AG04449 (cell line): ENCODE measurements at regions of chr15 and their contacts with region 1.

Region 1: DNA sequence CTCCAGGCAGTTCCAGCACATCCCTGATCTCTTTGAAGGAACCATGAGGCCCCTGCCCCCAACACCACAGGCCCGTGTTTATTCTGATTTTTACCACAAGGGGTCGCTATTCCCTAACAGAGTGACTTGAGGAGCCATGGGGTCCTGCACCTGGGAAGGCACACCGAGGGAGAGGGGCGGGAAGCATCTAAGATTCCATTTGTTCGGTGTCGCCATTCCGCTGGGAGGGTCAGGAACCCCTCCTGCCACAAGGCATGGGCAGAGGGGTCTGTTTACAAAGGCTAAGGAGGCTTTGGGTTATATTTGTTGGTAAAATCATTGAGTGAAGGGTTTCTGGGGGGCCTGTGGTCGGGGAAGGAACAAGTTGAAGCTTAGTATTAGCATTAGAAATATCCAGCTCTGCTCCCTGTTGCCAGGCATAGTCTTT is 77.1 kb downstream of the WDR76 start:
- DNase-seq: no peak
- H3K4me3 ChIP-seq: no peak overlapping the region
- CTCF ChIP-seq: peak; percentile 70

Region 2: GRCh38 chr15:43872416-43873020 is 31.4 kb before region 1 on chr15:
- CTCF ChIA-PET with region 1: interaction called, 10 read pairs
- POLR2A ChIA-PET with region 1: no interaction called
- DNase-seq: peak; percentile 28
- H3K4me3 ChIP-seq: no peak overlapping the region
- CTCF ChIP-seq: peak; percentile 77

Region 3: DNA sequence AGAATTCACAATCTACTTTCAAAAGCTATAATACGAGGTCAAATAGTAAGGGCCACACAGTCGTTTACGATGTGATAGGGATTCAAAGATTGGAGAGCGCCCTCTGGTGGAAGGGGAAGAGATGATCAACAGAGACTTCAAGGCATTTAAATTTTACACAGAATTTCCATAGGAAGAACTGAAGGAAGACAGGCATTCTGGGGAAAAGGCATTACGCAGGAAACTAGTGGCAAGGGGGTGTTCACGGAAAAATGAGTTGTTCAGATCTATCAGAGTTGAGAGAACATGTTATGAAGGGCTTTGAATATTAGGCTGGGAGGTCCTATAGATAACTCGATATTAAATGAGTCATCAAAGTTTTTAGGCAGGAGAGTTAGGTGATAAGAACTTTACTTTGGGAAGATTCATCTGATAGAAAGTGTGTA is 162.5 kb after region 1 on chr15:
- CTCF ChIA-PET with region 1: interaction called, 142 read pairs
- POLR2A ChIA-PET with region 1: no interaction called
- DNase-seq: no peak
- H3K4me3 ChIP-seq: no peak overlapping the region
- CTCF ChIP-seq: peak; percentile 63

Region 4: DNA sequence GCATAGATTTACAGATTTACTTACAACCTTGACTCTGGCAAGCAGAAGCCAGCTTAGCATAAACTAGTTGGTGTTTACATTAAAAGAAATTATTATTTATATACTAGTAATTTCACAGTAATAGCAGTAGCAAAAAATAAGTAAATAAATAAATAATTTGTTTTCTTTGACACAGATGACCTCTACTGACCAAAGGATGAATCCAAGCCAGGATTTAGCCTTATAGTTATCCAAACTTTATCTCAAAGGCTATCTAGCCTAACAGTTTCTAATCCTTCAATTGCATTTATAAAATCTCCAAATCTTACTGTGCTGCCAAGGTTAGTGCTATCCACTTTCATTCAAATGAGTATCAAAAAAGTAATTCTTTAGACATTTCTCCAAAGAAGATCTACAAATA is 226.9 kb after region 1 on chr15:
- CTCF ChIA-PET with region 1: interaction called, 23 read pairs
- POLR2A ChIA-PET with region 1: no interaction called
- DNase-seq: no peak
- H3K4me3 ChIP-seq: no peak overlapping the region
- CTCF ChIP-seq: no peak

Region 5: DNA sequence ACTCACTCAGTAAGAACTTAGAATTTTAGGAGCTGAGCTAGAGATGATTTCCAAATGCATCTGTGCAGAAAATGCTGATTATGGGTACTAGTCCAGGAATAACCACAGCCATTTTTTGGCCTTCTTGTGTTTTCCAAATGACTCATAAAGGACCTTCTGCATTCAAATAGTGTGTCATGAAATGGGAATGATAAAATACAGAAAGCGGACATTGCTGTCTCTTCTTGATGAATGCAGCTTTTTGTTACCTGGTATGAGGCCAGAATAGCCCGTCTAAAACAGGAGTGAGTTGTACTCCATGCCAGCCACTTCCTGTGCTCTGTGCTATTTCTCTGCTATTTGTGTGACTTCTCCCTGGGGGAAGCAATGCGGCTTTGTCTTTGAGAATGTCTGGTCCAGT is 311.7 kb after region 1 on chr15:
- CTCF ChIA-PET with region 1: interaction called, 160 read pairs
- POLR2A ChIA-PET with region 1: no interaction called
- DNase-seq: peak; percentile 75
- H3K4me3 ChIP-seq: no peak overlapping the region
- CTCF ChIP-seq: no peak

Region 6: DNA sequence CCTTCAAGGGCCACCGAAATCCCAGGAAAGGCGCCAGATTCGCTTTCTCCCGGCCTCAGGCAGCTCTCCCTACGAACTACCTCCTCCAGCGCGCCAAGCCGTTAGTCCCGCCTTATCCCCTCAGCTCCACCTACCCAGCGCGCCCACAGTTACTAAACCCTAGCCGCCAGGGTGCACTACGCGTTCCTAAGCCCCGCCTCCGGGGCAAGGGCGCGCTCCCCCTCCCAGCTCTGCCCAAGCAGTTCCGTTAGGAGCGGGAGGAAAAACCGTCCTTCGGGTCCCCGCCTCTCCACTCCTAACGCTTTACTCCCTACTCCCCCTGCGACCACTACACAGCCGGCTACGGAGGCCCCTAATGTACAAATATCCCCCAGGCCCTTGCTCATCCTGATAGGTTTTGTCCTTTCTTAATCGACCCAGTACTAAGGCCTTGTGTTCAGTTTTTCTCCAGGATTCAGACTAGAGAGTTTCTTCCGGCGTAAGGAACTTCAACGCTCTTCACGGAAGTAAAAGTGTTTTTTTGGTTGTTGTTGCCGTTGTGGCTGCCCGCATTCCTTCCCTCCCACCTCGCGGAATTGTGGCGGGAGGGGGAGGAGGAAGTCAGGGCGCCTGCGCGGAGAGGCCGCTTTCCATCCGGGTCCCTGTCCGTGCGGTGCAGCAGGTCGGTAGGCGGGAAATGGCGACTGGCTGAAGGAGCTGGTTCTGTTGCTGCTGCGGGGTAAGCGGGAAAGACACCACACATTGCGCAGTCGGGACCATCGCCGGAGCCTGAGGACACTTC is 523.3 kb after region 1 on chr15 and contains the start of gene CTDSPL2:
- CTCF ChIA-PET with region 1: no interaction called
- POLR2A ChIA-PET with region 1: no interaction called
- DNase-seq: peak; percentile 92
- H3K4me3 ChIP-seq: peak within 1 kb of the TSS; percentile 97
- CTCF ChIP-seq: peak; percentile 56